ENCODE measurements at regions of chr7 and their contacts with region 1.

Region 1: DNA sequence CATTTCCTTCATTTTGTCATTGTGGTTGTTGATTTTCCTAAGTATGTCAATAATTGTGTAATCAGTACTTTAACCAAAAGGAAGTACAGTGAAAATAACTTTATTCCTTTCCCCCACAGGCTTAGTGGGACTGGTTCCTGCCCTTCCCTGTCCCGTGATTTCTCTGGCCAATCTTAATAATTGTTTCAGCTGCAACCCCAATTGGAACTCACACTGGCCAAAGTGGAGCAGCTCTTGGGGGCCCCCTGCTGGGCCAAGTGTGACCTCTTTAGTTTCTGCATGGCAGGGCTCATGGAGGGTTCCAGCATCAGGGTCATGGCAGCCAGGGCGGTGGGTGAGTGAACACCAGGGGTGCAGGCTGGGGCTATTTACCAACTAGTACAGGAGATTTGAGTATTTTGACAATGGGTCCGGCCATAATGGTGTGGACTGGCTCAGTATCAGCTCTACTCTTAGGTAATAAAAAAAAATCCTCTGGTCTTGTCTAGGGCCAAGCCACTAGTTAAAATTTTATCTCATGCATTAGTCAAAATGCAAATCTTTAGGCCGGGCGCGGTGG is 31.7 kb downstream of the CYCS start:
- DNase-seq: peak; percentile 88
- ATAC-seq: peak; percentile 96
- H3K4me3 ChIP-seq: no peak overlapping the region
- H3K27ac ChIP-seq: no peak overlapping the region
- H3K4me1 ChIP-seq: no peaks in the 10 kb centered on the region
- H3K27me3 ChIP-seq: no peaks in the 10 kb centered on the region
- CTCF ChIP-seq: peak; percentile 81

Region 2: GRCh38 chr7:24819916-24820689 is 273.2 kb before region 1 on chr7:
- intact Hi-C with region 1: loop called (anchors 10 kb)
- DNase-seq: peak; percentile 81
- ATAC-seq: peak; percentile 95
- H3K4me3 ChIP-seq: no peak overlapping the region
- H3K27ac ChIP-seq: no peak overlapping the region
- H3K4me1 ChIP-seq: peaks cover 21% of the 10 kb centered on the region
- H3K27me3 ChIP-seq: no peaks in the 10 kb centered on the region
- CTCF ChIP-seq: peak; percentile 88

Region 3: GRCh38 chr7:25139536-25139935 is 46.2 kb after region 1 on chr7:
- intact Hi-C with region 1: no loop called
- DNase-seq: no peak
- ATAC-seq: no peak
- H3K4me3 ChIP-seq: no peak overlapping the region
- H3K27ac ChIP-seq: no peak overlapping the region
- H3K4me1 ChIP-seq: no peaks in the 10 kb centered on the region
- H3K27me3 ChIP-seq: no peaks in the 10 kb centered on the region
- CTCF ChIP-seq: no peak